T-cell (primary cell): ENCODE measurements at regions of chr6 and their contacts with region 1.

Region 1: DNA sequence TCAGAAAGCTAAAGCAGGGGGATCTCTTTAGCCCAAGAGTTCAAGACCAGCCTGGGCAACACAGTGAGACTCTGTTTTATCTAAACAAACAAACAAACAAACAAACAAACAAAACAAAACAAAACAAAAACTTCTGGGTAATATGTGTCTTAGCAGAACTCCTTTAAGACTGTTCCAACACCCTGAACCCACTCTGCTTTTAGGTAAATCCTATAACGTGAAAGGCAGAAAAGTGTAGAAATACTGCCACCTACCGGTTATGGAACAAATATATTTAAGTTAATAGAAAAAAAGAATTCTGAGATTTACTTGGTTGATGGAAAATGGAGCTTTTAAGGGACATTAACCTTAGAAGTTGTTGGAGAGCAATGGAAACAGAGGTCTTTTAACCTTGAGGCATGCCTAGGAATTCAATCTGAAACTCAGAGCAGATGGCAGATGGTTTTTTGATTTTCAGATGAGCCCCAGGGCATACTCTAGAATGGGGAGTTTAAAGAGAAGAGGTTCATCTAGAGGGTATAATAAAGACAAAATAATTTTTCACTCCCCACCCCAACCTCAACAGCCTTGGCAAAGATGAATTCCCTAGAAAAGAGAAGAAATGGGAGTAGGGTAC is 38.5 kb downstream of the SOD2 start:
- DNase-seq: peak in 2 of 35 experiments; percentile 5 to 67
- ATAC-seq: no peak
- H3K4me3 ChIP-seq: no peak overlapping the region
- H3K4me3 Mint-ChIP-seq: no peak overlapping the region
- H3K27ac ChIP-seq: no peak overlapping the region
- H3K27ac Mint-ChIP-seq: no peak overlapping the region
- H3K4me1 ChIP-seq: no peaks in the 10 kb centered on the region
- H3K4me1 Mint-ChIP-seq: no peaks in the 10 kb centered on the region
- H3K27me3 ChIP-seq: no peaks in the 10 kb centered on the region
- H3K27me3 Mint-ChIP-seq: no peaks in the 10 kb centered on the region

Region 2: DNA sequence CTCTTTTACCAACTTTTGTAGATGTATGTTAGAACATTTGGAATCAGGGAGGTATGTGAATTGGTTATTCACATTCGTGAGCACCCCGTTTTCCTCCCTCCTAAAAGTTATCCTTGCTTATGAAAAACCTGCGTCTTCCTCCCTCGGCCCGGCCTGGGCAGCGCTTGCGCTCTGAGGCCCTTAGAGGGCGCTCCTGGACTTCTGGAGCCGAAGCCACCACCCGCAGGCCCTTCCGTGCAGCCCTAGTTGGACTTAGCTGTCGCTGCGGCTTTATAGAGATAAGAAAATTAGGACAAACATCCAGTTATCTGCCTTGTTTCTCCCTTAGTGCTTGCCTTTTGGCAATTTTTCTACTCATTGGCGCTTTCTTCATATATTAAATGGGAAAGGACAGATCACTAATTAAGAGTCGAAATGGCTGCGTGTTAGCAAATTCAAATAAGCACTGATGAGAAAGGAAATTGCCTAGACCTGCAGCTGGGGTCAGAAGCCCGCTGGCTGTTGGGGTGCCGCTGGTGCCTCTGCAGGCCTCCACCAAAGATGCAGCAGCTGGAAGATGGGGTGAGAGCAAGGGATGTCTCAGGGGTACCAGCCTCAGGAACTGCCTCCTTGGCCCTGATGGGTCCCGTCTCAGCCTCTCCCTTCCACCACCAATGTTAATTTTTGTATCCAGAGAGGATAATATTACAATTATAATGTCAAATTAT is 480.2 kb before region 1 on chr6:
- CTCF ChIA-PET with region 1: interaction called, 5 to 10 read pairs
- POLR2A ChIA-PET with region 1: no interaction called
- DNase-seq: peak; percentile 19 to 73 (median 48)
- ATAC-seq: peak; percentile 78 to 91 (median 82)
- H3K4me3 ChIP-seq: no peak overlapping the region
- H3K4me3 Mint-ChIP-seq: no peak overlapping the region
- H3K27ac ChIP-seq: no peak overlapping the region
- H3K27ac Mint-ChIP-seq: no peak overlapping the region
- H3K4me1 ChIP-seq: peaks cover 2 to 14% of the 10 kb centered on the region in 2 experiments
- H3K4me1 Mint-ChIP-seq: peaks cover 11 to 16% (median 14%) of the 10 kb centered on the region in 3 donors
- H3K27me3 ChIP-seq: peaks cover 19 to 33% of the 10 kb centered on the region in 2 experiments
- H3K27me3 Mint-ChIP-seq: peaks cover 57 to 60% of the 10 kb centered on the region in 2 donors

Region 3: DNA sequence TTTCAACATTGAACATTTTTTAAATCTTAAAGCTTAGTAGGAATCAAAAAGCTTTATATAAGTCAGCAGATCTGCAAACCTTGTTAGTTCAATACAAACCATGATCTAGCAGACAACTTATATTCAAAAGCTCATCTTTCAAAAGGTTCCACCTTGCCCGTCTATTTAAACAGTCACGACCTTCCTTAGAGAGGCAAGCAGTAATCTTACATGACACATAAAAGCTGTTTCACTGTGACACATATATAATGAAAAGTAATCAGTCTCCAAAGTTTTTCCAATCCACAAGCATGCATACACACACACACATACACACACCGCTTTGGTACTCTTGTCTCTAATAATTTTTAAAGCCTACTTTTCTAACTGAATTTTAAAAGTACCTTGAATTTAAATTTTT is 25.5 kb after region 1 on chr6:
- CTCF ChIA-PET with region 1: interaction called, 3 read pairs
- POLR2A ChIA-PET with region 1: interaction called in 1 of 2 experiments, 10 read pairs
- DNase-seq: no peak
- ATAC-seq: no peak
- H3K4me3 ChIP-seq: no peak overlapping the region
- H3K4me3 Mint-ChIP-seq: no peak overlapping the region
- H3K27ac ChIP-seq: no peak overlapping the region
- H3K27ac Mint-ChIP-seq: peak overlapping the region in 1 of 2 donors; percentile 53
- H3K4me1 ChIP-seq: no peaks in the 10 kb centered on the region
- H3K4me1 Mint-ChIP-seq: peaks cover 5 to 20% (median 17%) of the 10 kb centered on the region in 3 donors
- H3K27me3 ChIP-seq: no peaks in the 10 kb centered on the region
- H3K27me3 Mint-ChIP-seq: no peaks in the 10 kb centered on the region